Ascending aorta (tissue), 2 donors: ENCODE measurements at regions of chr18 and their contacts with region 1.

Region 1: GRCh38 chr18:9334329-9334972 is at the start of gene TWSG1:
- DNase-seq: peak; percentile 70 to 96
- H3K4me3 ChIP-seq: peak within 1 kb of the TSS; percentile 69 to 86
- H3K27ac ChIP-seq: peak within 1 kb of the TSS; percentile 85 to 95
- H3K4me1 ChIP-seq: peaks cover 0 to 14% of the 10 kb centered on the region in 2 donors
- H3K27me3 ChIP-seq: no peaks in the 10 kb centered on the region
- CTCF ChIP-seq: peak; percentile 16 to 60 (median 59)
- total RNA-seq, gene TWSG1: 25.0 TPM

Region 2: GRCh38 chr18:8998481-8999217 is 335.8 kb before region 1 on chr18:
- intact Hi-C with region 1: no loop called
- DNase-seq: no peak
- H3K4me3 ChIP-seq: no peak overlapping the region
- H3K27ac ChIP-seq: no peak overlapping the region
- H3K4me1 ChIP-seq: peaks cover 0 to 9% of the 10 kb centered on the region in 2 donors
- H3K27me3 ChIP-seq: no peaks in the 10 kb centered on the region
- CTCF ChIP-seq: no peak

Region 3: GRCh38 chr18:9102508-9103375 is 231.7 kb before region 1 on chr18 and contains the start of gene NDUFV2:
- intact Hi-C with region 1: loop called (anchors 1 kb)
- DNase-seq: peak; percentile 80 to 98
- H3K4me3 ChIP-seq: peak within 1 kb of the TSS; percentile 67 to 77
- H3K27ac ChIP-seq: peak within 1 kb of the TSS; percentile 91 to 92
- H3K4me1 ChIP-seq: peaks cover 3 to 31% of the 10 kb centered on the region in 2 donors
- H3K27me3 ChIP-seq: no peaks in the 10 kb centered on the region
- CTCF ChIP-seq: peak in 1 of 3 experiments; percentile 16
- total RNA-seq, gene NDUFV2: 48.6 TPM

Region 4: GRCh38 chr18:9353596-9353995 is 19.1 kb after region 1 on chr18:
- intact Hi-C with region 1: loop called (anchors 1 kb)
- DNase-seq: no peak
- H3K4me3 ChIP-seq: no peak overlapping the region
- H3K27ac ChIP-seq: peak overlapping the region; percentile 70 to 79
- H3K4me1 ChIP-seq: peaks cover 0 to 33% of the 10 kb centered on the region in 2 donors
- H3K27me3 ChIP-seq: no peaks in the 10 kb centered on the region
- CTCF ChIP-seq: no peak

Region 5: GRCh38 chr18:9417073-9417841 is 82.8 kb after region 1 on chr18:
- intact Hi-C with region 1: loop called (anchors 10 kb)
- DNase-seq: no peak
- H3K4me3 ChIP-seq: peak overlapping the region; percentile 19 to 53
- H3K27ac ChIP-seq: peak overlapping the region; percentile 43 to 55
- H3K4me1 ChIP-seq: no peaks in the 10 kb centered on the region
- H3K27me3 ChIP-seq: no peaks in the 10 kb centered on the region
- CTCF ChIP-seq: no peak

Region 6: GRCh38 chr18:9535382-9535991 is 201.0 kb after region 1 on chr18:
- intact Hi-C with region 1: loop called (anchors 5 kb)
- DNase-seq: peak in 1 of 2 donors; percentile 80
- H3K4me3 ChIP-seq: peak overlapping the region; percentile 27 to 56
- H3K27ac ChIP-seq: peak overlapping the region; percentile 58 to 81
- H3K4me1 ChIP-seq: peaks cover 2 to 3% of the 10 kb centered on the region in 2 donors
- H3K27me3 ChIP-seq: no peaks in the 10 kb centered on the region
- CTCF ChIP-seq: no peak